ENCODE measurements at regions of chr19 and their contacts with region 1.

Region 1: DNA sequence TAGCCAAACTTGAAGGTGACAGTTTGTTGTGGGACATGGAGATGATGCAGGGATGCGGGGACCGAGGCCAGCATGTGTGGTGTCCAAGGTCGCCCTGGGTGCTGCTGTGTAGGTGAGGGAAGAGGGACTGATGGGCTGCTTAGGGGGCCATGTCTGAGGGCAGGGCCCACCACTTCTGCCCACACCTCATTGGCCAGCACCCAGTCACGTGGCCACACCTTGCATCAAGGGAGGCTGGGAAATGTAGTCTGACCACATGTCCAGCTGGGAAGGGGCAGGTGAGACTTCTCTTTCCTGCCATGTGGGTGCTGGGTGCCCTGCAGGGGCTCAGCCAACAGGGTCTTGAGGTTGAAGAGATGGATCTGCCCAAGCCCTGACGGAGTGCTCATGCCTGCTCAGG is 88.9 kb downstream of the KDM4B start:
- DNase-seq: no peak
- ATAC-seq: no peak
- H3K4me3 ChIP-seq: no peak overlapping the region
- H3K27ac ChIP-seq: no peak overlapping the region
- H3K4me1 ChIP-seq: peaks cover 0 to 35% (median 11%) of the 10 kb centered on the region in 12 donors
- H3K27me3 ChIP-seq: no peaks in the 10 kb centered on the region
- CTCF ChIP-seq: no peak
- POLR2A ChIP-seq: no peak

Region 2: GRCh38 chr19:5128251-5128935 is 70.5 kb after region 1 on chr19:
- intact Hi-C with region 1: loop called in 2 of 10 experiments (anchors 10 kb)
- DNase-seq: peak in 4 of 5 donors; percentile 75 to 87 (median 80)
- ATAC-seq: peak; percentile 86 to 93 (median 88)
- H3K4me3 ChIP-seq: peak overlapping the region in 1 of 12 donors; percentile 8
- H3K27ac ChIP-seq: peak overlapping the region in 11 of 12 donors; percentile 43 to 80 (median 55)
- H3K4me1 ChIP-seq: peaks cover 5 to 50% (median 27%) of the 10 kb centered on the region in 12 donors
- H3K27me3 ChIP-seq: no peaks in the 10 kb centered on the region
- CTCF ChIP-seq: no peak
- POLR2A ChIP-seq: no peak

Region 3: GRCh38 chr19:5138606-5139582 is 81.0 kb after region 1 on chr19:
- intact Hi-C with region 1: loop called in 3 of 10 experiments (anchors 5 to 10 kb)
- DNase-seq: peak; percentile 52 to 80 (median 62)
- ATAC-seq: peak in 3 of 4 donors; percentile 3 to 48 (median 25)
- H3K4me3 ChIP-seq: no peak overlapping the region
- H3K27ac ChIP-seq: no peak overlapping the region
- H3K4me1 ChIP-seq: peaks cover 0 to 33% (median 9%) of the 10 kb centered on the region in 12 donors
- H3K27me3 ChIP-seq: no peaks in the 10 kb centered on the region
- CTCF ChIP-seq: peak in 1 of 12 donors; percentile 2
- POLR2A ChIP-seq: no peak

Region 4: DNA sequence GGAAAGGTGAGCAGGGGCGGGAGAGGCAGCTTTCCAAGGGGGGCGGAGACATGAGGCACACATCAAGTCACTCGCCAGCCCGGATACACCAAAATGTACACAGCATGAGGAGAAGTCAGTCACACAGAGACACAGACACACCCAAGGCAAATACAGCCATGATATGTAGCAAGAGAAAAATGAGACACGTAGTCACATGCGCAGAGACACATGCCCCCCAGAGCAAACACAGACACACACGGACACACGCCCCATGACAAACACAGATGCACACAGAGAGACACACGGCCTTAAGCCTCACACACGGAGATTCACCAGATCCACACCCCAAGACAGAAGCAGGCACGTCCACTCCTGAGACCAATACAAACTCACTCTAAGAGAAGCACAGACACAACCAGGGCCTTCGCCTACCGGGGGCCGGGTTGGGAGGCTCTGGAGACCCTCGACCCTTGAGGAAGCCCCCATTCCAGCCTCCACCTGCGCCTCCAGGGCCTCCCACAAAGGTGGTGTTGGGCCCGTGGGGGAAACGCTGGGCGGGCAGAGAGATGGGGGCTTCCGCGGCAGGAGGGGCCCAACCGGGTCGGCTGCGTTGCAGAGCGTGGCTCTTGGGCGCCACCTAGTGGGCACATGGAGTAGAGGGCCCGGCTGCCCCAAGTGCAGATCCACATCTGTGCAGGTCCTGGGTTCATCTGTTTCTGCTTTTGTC is 520.1 kb after region 1 on chr19:
- intact Hi-C with region 1: loop called in 1 of 10 experiments (anchors 10 kb)
- DNase-seq: peak; percentile 44 to 81 (median 60)
- ATAC-seq: peak; percentile 58 to 83 (median 79)
- H3K4me3 ChIP-seq: no peak overlapping the region
- H3K27ac ChIP-seq: no peak overlapping the region
- H3K4me1 ChIP-seq: peaks cover 0 to 8% (median 3%) of the 10 kb centered on the region in 12 donors
- H3K27me3 ChIP-seq: no peaks in the 10 kb centered on the region
- CTCF ChIP-seq: peak; percentile 93 to 100 (median 99)
- POLR2A ChIP-seq: no peak

Measured in heart left ventricle (tissue), 16 donors.